Activated naive CD8-positive, alpha-beta T cell treated with anti-CD3 and anti-CD28 coated beads, Interleukin-2, amount 10 ng/mL, durations not matched to agents 7 days and 5 days (primary cell): ENCODE measurements at regions of chr6 and their contacts with region 1.

Region 1: GRCh38 chr6:33454009-33454946 is at the start of gene ZBTB9:
- DNase-seq: peak; percentile 93
- ATAC-seq: peak; percentile 99
- H3K4me3 Mint-ChIP-seq: peak within 1 kb of the TSS; percentile 86
- H3K27ac Mint-ChIP-seq: peak within 1 kb of the TSS; percentile 75
- H3K4me1 Mint-ChIP-seq: peaks cover 21% of the 10 kb centered on the region
- H3K27me3 Mint-ChIP-seq: no peaks in the 10 kb centered on the region
- total RNA-seq, gene ZBTB9: 9.1 to 9.8 TPM

Region 2: GRCh38 chr6:33490209-33490608 is 35.9 kb after region 1 on chr6:
- POLR2A ChIA-PET with region 1: no interaction called
- DNase-seq: no peak
- ATAC-seq: no peak
- H3K4me3 Mint-ChIP-seq: no peak overlapping the region
- H3K27ac Mint-ChIP-seq: no peak overlapping the region
- H3K4me1 Mint-ChIP-seq: no peaks in the 10 kb centered on the region
- H3K27me3 Mint-ChIP-seq: peaks cover 13% of the 10 kb centered on the region

Region 3: DNA sequence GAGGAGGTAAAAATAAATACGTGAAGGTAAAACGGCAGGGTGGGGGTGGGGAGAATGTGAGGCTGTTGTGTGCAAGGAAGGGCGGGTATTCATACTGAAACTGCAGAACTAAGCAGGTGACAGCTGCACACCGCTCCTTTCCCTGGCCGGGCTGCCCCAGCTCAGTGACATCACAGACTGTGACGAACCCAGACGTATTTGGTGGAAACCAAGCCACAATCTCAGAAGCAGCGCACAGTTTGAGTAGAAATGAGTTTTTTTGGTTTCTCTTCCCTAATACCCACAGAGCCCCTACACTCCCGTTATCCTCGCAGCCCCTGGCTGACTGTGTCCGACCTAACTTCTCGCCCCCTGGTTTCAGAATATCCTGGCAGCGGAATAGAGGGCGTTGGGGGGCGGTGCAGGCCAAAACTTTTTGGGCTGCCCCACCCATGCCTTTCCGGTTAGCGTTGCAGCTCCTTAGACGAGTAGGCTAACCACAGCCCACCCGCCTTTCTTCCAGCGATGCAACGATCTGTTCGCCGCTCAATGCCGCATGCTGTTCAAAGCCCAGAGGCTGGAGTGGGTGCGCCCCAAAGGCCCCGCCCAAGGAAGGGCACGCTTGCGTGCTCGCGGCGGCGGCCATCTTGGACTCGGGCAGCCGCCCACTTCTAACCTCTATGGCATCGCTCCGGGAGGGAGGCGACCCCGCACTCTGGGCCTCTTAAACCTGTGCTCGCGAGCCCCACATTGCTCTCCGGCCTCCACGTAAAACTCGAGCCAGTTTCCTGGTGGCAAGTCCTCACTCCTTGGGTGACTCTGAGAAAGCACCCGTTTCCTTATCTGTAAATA is 116.7 kb after region 1 on chr6:
- POLR2A ChIA-PET with region 1: interaction called, 14 read pairs
- DNase-seq: peak; percentile 93
- ATAC-seq: peak; percentile 91
- H3K4me3 Mint-ChIP-seq: peak overlapping the region; percentile 90
- H3K27ac Mint-ChIP-seq: peak overlapping the region; percentile 99
- H3K4me1 Mint-ChIP-seq: peaks cover 28% of the 10 kb centered on the region
- H3K27me3 Mint-ChIP-seq: no peaks in the 10 kb centered on the region